Natural killer cell (primary cell): ENCODE measurements at regions of chr2 and their contacts with region 1.

Region 1: GRCh38 chr2:8514796-8515758 is 166.8 kb upstream of the ID2 start:
- DNase-seq: peak; percentile 46 to 85
- ATAC-seq: peak; percentile 43 to 76 (median 63)
- H3K4me3 ChIP-seq: no peak overlapping the region
- H3K4me3 Mint-ChIP-seq: peak overlapping the region; percentile 68
- H3K27ac ChIP-seq: peak overlapping the region; percentile 92
- H3K27ac Mint-ChIP-seq: peak overlapping the region; percentile 88 to 94
- H3K4me1 ChIP-seq: peaks cover 99% of the 10 kb centered on the region
- H3K4me1 Mint-ChIP-seq: peaks cover 71 to 84% of the 10 kb centered on the region in 2 donors
- H3K27me3 ChIP-seq: no peaks in the 10 kb centered on the region
- H3K27me3 Mint-ChIP-seq: no peaks in the 10 kb centered on the region
- CTCF ChIP-seq: no peak

Region 2: DNA sequence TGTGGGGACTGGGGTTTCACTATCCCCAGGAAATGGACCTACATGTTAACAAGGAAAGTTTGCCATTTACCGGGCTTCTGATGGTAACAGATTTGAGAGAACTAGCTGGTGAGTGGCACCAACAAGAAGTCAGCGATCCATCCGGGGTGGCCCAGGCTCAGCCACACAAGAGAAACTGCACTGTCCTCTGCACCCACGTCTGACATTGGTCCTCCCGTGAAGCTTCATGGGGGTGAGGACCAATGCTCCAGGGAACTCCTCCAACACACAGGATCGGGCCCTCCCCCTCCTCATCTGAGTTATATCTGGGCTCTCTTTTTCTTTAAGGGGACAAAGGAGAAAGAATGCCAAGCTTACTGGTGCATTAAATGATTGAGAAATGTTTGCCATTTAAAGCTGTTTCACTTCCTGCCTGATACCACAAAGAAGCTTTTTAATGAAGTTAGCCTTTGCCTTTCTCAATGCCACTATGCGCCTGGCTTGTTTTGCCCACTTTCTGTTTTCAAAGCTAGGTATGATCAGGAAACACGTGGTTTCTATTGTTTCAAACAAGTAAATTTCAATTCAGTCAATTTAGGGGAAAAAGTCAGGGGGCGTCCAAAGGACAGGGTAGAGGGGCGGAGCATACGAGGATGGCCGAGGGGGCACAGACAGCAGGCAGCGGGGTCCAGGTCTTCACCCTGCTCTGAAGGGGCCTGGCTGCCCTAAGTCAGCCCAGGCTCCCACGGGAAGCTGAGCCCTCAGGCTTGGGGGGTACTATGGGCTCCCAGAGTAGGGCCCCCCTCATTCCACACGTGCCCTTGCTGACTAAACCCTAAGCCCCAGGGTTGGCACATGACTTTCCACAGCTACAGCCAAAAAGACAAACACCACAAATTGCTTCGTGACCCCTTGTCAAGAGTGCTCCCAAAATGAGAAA is 37.3 kb before region 1 on chr2:
- intact Hi-C with region 1: loop called (anchors 5 kb)
- DNase-seq: peak; percentile 44 to 68
- ATAC-seq: peak; percentile 46 to 69 (median 66)
- H3K4me3 ChIP-seq: peak overlapping the region; percentile 17
- H3K4me3 Mint-ChIP-seq: peak overlapping the region; percentile 86
- H3K27ac ChIP-seq: peak overlapping the region; percentile 93
- H3K27ac Mint-ChIP-seq: peak overlapping the region; percentile 86 to 100
- H3K4me1 ChIP-seq: peaks cover 94% of the 10 kb centered on the region
- H3K4me1 Mint-ChIP-seq: peaks cover 97 to 100% of the 10 kb centered on the region in 2 donors
- H3K27me3 ChIP-seq: no peaks in the 10 kb centered on the region
- H3K27me3 Mint-ChIP-seq: no peaks in the 10 kb centered on the region
- CTCF ChIP-seq: no peak

Region 3: GRCh38 chr2:8544786-8545694 is 30.0 kb after region 1 on chr2:
- intact Hi-C with region 1: no loop called
- DNase-seq: peak; percentile 71 to 88
- ATAC-seq: peak; percentile 67 to 78 (median 69)
- H3K4me3 ChIP-seq: no peak overlapping the region
- H3K4me3 Mint-ChIP-seq: peak overlapping the region; percentile 50
- H3K27ac ChIP-seq: peak overlapping the region; percentile 87
- H3K27ac Mint-ChIP-seq: peak overlapping the region; percentile 99
- H3K4me1 ChIP-seq: peaks cover 74% of the 10 kb centered on the region
- H3K4me1 Mint-ChIP-seq: peaks cover 73 to 82% of the 10 kb centered on the region in 2 donors
- H3K27me3 ChIP-seq: no peaks in the 10 kb centered on the region
- H3K27me3 Mint-ChIP-seq: no peaks in the 10 kb centered on the region
- CTCF ChIP-seq: peak; percentile 45